ENCODE measurements at regions of chr10 and their contacts with region 1.

Region 1: DNA sequence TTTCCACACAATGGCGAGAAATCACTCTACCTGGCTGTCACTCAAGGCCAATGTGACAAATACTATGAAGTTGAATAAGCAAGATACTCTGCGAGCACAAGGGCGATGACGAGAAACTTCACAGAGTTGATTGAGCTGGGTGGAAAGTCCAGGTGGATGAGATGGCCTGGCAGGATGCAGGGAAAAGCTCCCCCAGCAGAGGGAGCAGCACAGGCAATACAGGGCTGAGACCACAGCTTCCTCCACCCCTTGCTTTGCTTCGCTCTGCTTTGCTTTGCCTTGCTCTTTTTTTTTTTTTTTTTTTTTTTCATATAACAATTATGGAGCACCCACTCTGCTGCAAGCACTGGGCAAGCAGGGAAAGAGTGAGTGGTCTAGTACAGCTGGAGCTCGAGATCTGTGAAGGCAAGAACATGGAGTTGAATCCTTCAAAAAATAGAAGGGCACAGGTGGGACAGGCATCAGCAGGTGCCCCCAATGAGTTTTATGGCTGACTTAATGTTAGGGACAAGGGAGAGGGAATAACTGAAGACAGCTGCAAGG is 88.3 kb downstream of the CABCOCO1 start:
- DNase-seq: peak; percentile 72
- H3K4me3 Mint-ChIP-seq: no peak overlapping the region
- H3K27ac Mint-ChIP-seq: peak overlapping the region; percentile 79
- H3K4me1 Mint-ChIP-seq: peaks cover 28% of the 10 kb centered on the region
- H3K27me3 Mint-ChIP-seq: no peaks in the 10 kb centered on the region

Region 2: DNA sequence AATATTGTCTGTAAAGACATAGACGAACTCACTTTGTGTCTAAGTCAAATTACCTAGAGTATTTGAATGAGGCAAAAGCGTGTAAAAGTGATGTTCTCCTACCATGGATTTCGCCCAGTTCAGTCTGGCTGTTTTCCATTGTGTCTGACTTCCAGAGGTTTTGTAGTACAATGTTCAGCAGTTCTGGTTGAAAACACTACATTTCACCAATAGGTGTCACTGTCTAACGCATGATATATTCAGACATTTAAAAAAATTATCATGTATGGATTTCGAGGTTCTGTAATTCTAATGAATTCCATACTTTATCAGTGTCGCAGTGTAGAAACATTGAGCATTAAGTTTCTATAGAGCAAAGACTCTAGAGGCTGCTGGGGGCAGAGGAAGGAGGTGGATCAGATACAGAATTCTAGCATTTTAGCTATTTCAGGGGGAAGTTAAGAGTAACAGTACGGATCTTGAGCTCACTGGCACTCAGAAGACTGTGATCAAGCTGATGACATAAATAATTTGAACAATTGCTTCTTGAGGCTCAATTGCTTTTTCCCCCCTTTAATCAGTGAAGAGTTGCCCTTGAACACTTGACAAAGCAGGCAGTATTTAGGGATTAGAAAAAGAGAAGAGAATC is 610.1 kb before region 1 on chr10:
- CTCF ChIA-PET with region 1: no interaction called
- POLR2A ChIA-PET with region 1: interaction called, 11 read pairs
- DNase-seq: no peak
- H3K4me3 Mint-ChIP-seq: no peak overlapping the region
- H3K27ac Mint-ChIP-seq: no peak overlapping the region
- H3K4me1 Mint-ChIP-seq: no peaks in the 10 kb centered on the region
- H3K27me3 Mint-ChIP-seq: peaks cover 6% of the 10 kb centered on the region

Region 3: GRCh38 chr10:61608255-61609039 is 142.6 kb before region 1 on chr10:
- CTCF ChIA-PET with region 1: no interaction called
- POLR2A ChIA-PET with region 1: no interaction called
- DNase-seq: no peak
- H3K4me3 Mint-ChIP-seq: no peak overlapping the region
- H3K27ac Mint-ChIP-seq: no peak overlapping the region
- H3K4me1 Mint-ChIP-seq: no peaks in the 10 kb centered on the region
- H3K27me3 Mint-ChIP-seq: peaks cover 12% of the 10 kb centered on the region

Region 4: DNA sequence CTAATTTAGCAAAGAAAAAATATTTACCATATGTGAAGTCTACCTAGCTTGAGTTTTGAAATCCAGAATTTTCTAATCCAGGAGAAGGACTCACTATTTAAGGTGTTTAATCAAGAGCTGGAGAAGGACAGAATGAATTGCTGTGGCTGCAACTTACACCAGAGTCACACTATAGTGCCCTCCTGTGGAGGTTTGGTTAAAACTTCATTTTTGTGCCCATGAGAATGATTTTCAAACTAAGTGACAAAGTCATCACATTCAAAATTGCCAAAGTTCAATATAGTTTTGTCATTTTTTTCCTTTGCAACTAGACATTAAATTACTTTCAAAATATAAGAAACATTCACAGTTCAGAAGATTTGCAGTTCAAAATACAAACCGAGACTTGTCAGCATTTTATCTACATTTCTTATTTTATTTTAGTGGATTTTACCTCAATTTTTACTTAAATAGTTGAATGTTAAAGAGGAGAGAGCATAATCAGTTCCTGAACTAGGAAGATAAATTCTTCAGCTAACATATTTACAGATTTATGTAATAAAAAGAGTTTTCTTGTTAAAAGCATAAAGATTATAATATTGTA is 17.6 kb before region 1 on chr10:
- CTCF ChIA-PET with region 1: interaction called, 14 read pairs
- POLR2A ChIA-PET with region 1: no interaction called
- DNase-seq: peak; percentile 25
- H3K4me3 Mint-ChIP-seq: no peak overlapping the region
- H3K27ac Mint-ChIP-seq: no peak overlapping the region
- H3K4me1 Mint-ChIP-seq: peaks cover 3% of the 10 kb centered on the region
- H3K27me3 Mint-ChIP-seq: peaks cover 48% of the 10 kb centered on the region

Region 5: GRCh38 chr10:61760943-61761824 is 10.2 kb after region 1 on chr10:
- CTCF ChIA-PET with region 1: interaction called, 19 read pairs
- POLR2A ChIA-PET with region 1: no interaction called
- DNase-seq: no peak
- H3K4me3 Mint-ChIP-seq: no peak overlapping the region
- H3K27ac Mint-ChIP-seq: no peak overlapping the region
- H3K4me1 Mint-ChIP-seq: peaks cover 23% of the 10 kb centered on the region
- H3K27me3 Mint-ChIP-seq: no peaks in the 10 kb centered on the region

Measured in activated CD4-positive, alpha-beta T cell treated with anti-CD3 and anti-CD28 coated beads, Interleukin-2, amount 10 ng/mL, durations not matched to agents 7 days and 5 days (primary cell).